Activated T-helper 1 cell treated with anti-CD3 and anti-CD28 coated beads, Interleukin-12 subunit alpha, Interleukin-12 subunit beta, Interleukin-2, Interleukin-4 antibody, amounts not matched to agents 30 ng/mL and 10 ng/mL and 1 ng/mL, durations not matched to agents 14 hours and 24 hours and 36 hours (primary cell): ENCODE measurements at regions of chr9 and their contacts with region 1.

Region 1: GRCh38 chr9:109182940-109183798 is 16.1 kb upstream of the FRRS1L start:
- DNase-seq: no peak
- H3K4me3 Mint-ChIP-seq: no peak overlapping the region
- H3K27ac Mint-ChIP-seq: no peak overlapping the region
- H3K4me1 Mint-ChIP-seq: peaks cover 7% of the 10 kb centered on the region
- H3K27me3 Mint-ChIP-seq: peaks cover 42% of the 10 kb centered on the region

Region 2: DNA sequence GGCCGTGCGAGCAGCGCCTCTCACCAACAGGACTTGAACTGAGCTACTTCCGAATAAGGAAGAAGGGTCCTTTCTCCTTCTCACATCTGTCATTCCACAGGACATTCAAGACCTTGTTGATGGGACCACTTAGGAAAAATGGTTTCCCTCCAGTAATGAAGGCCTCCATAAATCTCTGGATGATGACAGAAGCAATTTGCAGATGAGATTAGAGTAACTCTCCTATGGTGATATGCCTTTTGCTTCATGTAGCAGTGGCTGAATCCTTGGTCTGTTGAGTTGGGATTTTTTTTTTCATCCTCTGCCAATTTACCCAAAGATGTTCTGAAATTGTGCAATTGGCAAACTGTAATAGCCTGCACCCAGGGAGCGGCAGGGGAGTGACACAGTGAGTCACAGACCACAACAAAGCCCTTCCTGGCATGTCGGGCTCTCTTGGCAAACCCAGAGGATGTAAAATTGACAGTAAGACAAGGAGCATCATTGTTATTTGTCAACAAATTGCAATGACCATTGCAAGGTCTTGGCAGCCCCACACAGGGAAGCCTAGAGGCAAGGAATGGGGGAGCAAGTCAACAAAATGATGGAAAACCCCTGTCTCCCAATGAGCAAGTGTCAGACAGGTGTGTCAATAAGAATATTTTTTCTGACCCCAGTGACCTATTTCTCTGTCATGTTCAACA is 603.3 kb before region 1 on chr9:
- intact Hi-C with region 1: no loop called
- DNase-seq: no peak
- H3K4me3 Mint-ChIP-seq: no peak overlapping the region
- H3K27ac Mint-ChIP-seq: no peak overlapping the region
- H3K4me1 Mint-ChIP-seq: no peaks in the 10 kb centered on the region
- H3K27me3 Mint-ChIP-seq: no peaks in the 10 kb centered on the region

Region 3: DNA sequence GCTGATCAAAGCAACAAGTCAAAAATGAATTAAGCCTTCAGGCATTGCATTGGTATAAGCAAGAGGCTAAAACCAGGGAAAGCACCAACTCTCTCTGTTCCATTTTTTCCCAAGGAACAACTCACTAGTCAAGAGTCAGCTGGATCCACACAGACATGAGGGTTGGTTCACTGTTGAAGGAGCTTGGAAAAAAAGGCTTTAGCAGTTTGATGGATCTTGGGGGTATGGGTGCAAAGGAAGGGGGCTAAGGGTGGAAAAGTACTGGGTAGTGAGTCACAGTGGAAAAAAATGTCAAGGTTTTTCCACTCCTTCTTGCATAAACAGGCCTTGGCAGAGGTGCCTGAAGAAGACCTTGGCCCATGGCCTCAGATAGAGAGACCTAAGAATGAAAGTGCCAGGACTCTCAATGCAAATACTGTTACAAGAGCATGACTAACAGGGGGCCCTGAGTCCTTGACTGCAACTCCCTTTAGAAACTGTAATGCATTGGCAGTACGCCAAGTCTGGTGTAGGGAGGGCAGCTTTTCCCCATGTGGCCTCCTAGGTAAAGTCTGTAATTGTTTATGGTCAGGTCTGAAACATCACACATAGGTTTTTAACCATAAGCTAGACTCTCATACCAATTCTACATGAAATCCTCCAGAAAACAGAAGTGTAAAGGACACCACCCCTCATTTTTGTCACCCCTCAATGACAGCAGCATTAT is 297.4 kb before region 1 on chr9:
- intact Hi-C with region 1: loop called (anchors 5 kb)
- DNase-seq: no peak
- H3K4me3 Mint-ChIP-seq: peak overlapping the region; percentile 8
- H3K27ac Mint-ChIP-seq: peak overlapping the region; percentile 80
- H3K4me1 Mint-ChIP-seq: peaks cover 16% of the 10 kb centered on the region
- H3K27me3 Mint-ChIP-seq: no peaks in the 10 kb centered on the region

Region 4: DNA sequence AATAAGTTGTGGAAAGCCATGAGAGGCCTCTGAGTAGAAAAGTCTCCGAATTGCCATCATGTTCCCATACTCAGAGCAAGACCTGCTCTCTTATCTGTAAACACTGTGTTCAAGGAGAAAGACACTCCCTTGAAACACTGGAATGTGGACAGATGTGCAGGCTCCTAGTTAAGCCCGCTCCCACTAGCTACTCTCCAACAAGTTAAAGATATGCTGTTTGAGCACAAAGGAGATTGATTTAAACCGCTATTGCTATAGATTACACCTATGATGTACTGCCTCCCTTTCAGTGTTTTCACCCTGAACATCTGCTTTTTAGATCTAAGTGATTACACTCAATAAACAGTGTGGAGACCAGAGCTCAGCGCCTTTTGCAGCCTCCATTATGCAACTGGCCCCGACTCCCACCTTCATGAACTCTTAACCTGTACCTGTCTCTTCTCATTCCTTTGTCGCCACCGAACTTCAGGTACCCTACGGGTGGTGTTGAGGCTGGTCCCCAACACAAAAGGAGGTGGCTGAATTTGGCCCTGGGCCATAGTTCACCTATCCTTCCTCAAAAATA is 111.0 kb before region 1 on chr9:
- intact Hi-C with region 1: no loop called
- DNase-seq: no peak
- H3K4me3 Mint-ChIP-seq: no peak overlapping the region
- H3K27ac Mint-ChIP-seq: no peak overlapping the region
- H3K4me1 Mint-ChIP-seq: peaks cover 10% of the 10 kb centered on the region
- H3K27me3 Mint-ChIP-seq: no peaks in the 10 kb centered on the region

Region 5: DNA sequence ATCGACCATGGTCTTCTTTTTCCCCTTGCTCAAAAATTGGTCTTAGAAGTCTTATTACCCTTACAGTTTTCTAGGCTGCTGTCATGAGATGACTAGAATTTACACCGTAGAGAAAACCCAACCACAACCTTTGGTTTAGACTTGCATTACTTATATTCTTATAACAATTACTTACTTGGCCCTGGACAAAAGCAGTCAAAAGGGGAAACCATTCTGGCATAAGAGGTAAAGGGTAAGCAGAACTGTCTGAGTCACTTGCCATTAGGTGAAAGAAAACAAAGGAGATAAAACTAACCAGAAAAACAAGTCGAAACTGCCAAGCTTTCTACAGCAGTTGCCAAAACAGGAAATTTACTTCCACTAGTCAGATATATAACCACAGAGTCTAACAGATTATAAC is 81.4 kb before region 1 on chr9:
- intact Hi-C with region 1: loop called (anchors 1 kb)
- DNase-seq: peak; percentile 14
- H3K4me3 Mint-ChIP-seq: peak overlapping the region; percentile 46
- H3K27ac Mint-ChIP-seq: peak overlapping the region; percentile 73
- H3K4me1 Mint-ChIP-seq: peaks cover 65% of the 10 kb centered on the region
- H3K27me3 Mint-ChIP-seq: no peaks in the 10 kb centered on the region

Region 6: GRCh38 chr9:109320742-109321448 is 137.7 kb after region 1 on chr9 and contains the start of gene EPB41L4B:
- intact Hi-C with region 1: loop called (anchors 1 kb)
- DNase-seq: peak; percentile 85
- H3K4me3 Mint-ChIP-seq: peak within 1 kb of the TSS; percentile 84
- H3K27ac Mint-ChIP-seq: peak within 1 kb of the TSS; percentile 72
- H3K4me1 Mint-ChIP-seq: peaks cover 23% of the 10 kb centered on the region
- H3K27me3 Mint-ChIP-seq: peaks cover 69% of the 10 kb centered on the region
- total RNA-seq, gene EPB41L4B: 2.0 and 2.2 TPM in 2 replicates

Region 7: DNA sequence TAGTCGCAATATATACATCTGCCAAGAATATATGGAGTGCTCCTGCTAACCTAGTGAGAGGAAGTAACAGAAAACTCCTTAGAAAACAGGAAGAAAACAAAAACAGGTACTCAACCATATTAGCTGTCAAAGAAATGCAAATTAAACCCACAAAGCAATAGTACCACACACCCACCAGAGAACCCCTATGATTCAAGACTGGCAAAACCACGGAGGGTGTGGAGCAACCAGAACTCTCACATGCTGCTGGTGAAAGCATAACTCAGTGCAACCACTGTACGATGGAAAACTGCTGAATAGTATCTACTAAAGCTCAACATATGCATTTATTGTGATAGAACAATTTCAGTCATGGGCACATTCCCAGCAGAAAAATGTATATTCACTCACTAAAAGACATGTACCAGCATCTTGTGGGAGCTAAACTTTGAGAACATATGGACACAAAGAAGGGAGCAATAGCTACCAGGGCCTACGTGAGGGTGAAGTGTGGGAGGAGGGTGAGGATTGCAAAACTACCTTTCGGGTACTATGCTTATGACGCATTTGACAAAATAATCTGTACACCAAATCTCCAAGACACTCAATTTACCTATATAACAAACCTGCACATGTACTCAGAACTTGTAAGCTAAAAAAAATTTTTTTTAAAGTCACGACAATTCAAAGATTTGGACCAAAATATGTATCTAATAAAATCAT is 280.9 kb after region 1 on chr9:
- intact Hi-C with region 1: loop called (anchors 1 kb)
- DNase-seq: peak; percentile 29
- H3K4me3 Mint-ChIP-seq: no peak overlapping the region
- H3K27ac Mint-ChIP-seq: peak overlapping the region; percentile 88
- H3K4me1 Mint-ChIP-seq: peaks cover 71% of the 10 kb centered on the region
- H3K27me3 Mint-ChIP-seq: peaks cover 1% of the 10 kb centered on the region

Region 8: DNA sequence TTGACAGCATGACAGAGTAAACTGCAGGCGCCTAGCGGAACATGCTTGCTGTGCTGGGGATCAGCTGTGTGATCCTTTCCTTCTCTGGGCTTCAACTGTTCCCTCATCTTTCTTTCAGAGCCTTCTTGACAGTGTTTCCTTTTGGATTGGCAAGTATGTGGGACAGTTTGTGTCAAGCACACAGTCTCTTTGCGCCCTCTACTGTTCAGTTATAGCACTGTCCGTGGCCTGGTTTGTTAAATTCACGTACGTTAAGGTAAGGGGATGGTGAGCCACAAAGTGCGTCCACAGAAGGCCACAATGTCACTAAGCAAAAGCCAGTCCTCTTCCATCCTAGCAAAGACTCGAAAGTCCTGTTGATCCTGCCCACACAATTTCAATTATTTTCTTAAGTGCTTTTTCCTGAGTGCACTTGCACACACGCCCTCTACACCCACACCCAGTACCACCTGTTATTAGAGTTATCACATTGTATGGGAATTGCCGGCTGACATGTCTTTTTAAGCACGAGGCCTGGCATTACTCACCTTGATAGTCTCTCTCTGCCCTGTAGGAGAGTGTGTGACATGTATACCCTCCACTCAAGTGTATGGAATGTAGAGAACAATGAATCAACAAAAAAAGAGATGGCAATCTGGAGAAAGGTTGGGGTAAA is 337.4 kb after region 1 on chr9:
- intact Hi-C with region 1: loop called (anchors 2 kb)
- DNase-seq: peak; percentile 24
- H3K4me3 Mint-ChIP-seq: no peak overlapping the region
- H3K27ac Mint-ChIP-seq: no peak overlapping the region
- H3K4me1 Mint-ChIP-seq: peaks cover 5% of the 10 kb centered on the region
- H3K27me3 Mint-ChIP-seq: peaks cover 17% of the 10 kb centered on the region